ENCODE measurements at regions of chr22 and their contacts with region 1.

Region 1: GRCh38 chr22:28442264-28442710 is 237.4 kb downstream of the TTC28 start:
- DNase-seq: peak; percentile 82
- H3K4me3 Mint-ChIP-seq: peak overlapping the region; percentile 72
- H3K27ac Mint-ChIP-seq: no peak overlapping the region
- H3K4me1 Mint-ChIP-seq: peaks cover 12% of the 10 kb centered on the region
- H3K27me3 Mint-ChIP-seq: peaks cover 27% of the 10 kb centered on the region

Region 2: GRCh38 chr22:27880778-27881394 is 561.4 kb before region 1 on chr22:
- CTCF ChIA-PET with region 1: no interaction called
- POLR2A ChIA-PET with region 1: no interaction called
- intact Hi-C with region 1: loop called (anchors 5 kb)
- DNase-seq: no peak
- H3K4me3 Mint-ChIP-seq: no peak overlapping the region
- H3K27ac Mint-ChIP-seq: no peak overlapping the region
- H3K4me1 Mint-ChIP-seq: peaks cover 27% of the 10 kb centered on the region
- H3K27me3 Mint-ChIP-seq: no peaks in the 10 kb centered on the region

Region 3: DNA sequence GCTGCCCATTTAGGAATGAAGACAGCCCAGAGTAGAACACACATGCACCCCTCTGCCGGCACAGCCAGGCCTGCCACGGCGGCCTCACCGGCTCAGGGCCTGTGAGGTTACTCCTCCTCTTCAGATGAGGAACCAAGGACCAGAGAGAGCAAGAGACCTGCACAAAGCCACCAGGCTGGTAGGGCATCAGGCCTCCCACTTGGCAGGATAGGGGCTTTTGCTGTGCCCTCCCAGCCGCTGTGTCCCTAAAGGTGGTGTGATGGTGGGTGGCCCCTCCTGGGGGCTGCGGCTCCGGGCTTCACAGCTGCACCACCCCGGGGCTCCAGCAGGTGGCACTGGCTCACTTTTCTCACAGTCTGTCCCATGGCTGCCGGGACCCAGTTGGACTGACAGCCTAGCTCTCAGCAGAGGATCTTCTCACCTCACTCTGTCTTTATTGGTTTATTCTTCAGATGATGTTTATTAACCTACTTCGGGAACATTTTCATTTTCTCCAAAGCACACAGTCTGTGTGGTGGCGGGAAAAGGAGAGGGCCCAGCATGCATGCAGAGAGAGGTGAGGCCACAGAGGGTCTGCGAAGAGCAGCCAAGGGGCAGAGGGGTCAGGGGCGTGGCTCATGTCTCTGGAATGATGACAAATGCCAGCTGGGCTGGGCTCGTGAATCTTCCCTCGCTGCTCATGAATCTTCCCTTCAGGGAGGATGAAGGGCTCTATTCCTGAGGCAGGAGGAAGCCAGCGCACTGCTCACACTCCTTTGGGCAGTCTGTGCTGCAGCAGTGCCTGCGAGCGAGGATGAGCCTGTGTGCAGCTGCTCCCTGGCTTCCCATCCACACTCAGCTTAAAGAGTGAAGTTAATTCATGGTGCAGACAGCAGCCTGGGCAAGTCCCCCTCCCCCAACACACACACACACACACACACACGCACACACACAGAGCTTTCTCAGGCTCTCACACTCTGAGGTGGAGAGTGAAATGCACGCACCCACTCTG is 422.1 kb before region 1 on chr22:
- CTCF ChIA-PET with region 1: interaction called, 16 read pairs
- POLR2A ChIA-PET with region 1: no interaction called
- intact Hi-C with region 1: no loop called
- DNase-seq: peak; percentile 71
- H3K4me3 Mint-ChIP-seq: no peak overlapping the region
- H3K27ac Mint-ChIP-seq: no peak overlapping the region
- H3K4me1 Mint-ChIP-seq: no peaks in the 10 kb centered on the region
- H3K27me3 Mint-ChIP-seq: peaks cover 2% of the 10 kb centered on the region

Region 4: DNA sequence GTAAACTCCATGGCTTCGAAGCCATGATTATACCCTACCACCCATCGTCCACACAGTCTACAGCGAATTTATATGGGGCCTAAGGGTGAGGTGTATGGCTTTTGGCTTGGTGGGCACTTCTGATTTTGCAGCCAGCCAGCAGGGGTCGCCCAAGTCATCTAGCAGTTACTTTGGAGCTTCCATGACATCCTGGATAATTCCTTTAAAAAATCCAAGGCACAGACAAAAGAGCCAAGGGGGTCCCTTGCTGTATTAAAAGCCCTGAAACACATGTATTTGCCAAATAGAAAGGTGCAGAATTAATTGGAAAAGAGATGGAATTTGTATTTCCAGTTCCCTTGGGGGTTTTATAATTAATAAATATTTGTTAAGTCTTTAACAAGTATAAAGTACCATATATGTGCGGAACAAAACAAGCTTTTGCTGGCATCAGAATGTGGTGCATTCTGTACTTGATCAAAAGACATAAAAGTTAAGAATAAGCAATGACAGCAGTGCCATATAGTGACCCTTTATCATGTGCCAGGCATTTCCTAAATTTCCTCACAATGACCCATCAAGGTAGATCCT is 390.4 kb before region 1 on chr22:
- CTCF ChIA-PET with region 1: interaction called, 11 read pairs
- POLR2A ChIA-PET with region 1: no interaction called
- intact Hi-C with region 1: no loop called
- DNase-seq: peak; percentile 41
- H3K4me3 Mint-ChIP-seq: no peak overlapping the region
- H3K27ac Mint-ChIP-seq: no peak overlapping the region
- H3K4me1 Mint-ChIP-seq: no peaks in the 10 kb centered on the region
- H3K27me3 Mint-ChIP-seq: no peaks in the 10 kb centered on the region

Region 5: DNA sequence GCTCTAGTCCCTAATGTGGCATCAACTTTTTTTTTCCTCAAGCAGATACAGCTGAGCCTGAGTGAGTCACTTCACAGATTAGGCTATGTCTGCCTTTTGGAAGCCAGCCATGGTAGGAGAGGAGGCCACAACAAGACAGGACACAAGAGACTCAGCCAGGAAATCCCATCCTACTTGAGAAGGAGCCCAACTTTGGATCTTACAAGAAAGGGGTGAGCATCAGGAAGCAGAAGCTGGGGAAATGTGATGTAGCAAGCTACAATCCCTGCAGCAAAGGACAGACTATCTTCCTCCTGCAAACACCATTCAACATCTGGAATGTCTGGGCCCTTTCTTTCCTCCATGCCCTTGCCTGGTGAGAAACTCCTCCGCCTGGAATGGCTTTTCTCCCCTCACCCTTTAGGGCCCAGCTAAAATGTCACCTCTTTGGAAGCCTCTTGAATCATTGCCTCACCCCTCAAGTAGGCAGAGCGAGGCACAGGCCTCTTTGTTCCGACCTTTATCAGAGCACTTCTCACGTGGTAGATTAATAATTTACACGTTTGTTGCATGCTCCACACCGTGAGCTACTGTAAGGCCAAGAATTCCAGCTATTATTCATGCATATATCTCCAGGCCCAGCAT is 366.8 kb before region 1 on chr22:
- CTCF ChIA-PET with region 1: no interaction called
- POLR2A ChIA-PET with region 1: no interaction called
- intact Hi-C with region 1: no loop called
- DNase-seq: no peak
- H3K4me3 Mint-ChIP-seq: no peak overlapping the region
- H3K27ac Mint-ChIP-seq: no peak overlapping the region
- H3K4me1 Mint-ChIP-seq: no peaks in the 10 kb centered on the region
- H3K27me3 Mint-ChIP-seq: no peaks in the 10 kb centered on the region

Region 6: GRCh38 chr22:28373831-28374230 is 68.5 kb before region 1 on chr22:
- CTCF ChIA-PET with region 1: no interaction called
- POLR2A ChIA-PET with region 1: no interaction called
- intact Hi-C with region 1: loop called (anchors 5 kb)
- DNase-seq: no peak
- H3K4me3 Mint-ChIP-seq: no peak overlapping the region
- H3K27ac Mint-ChIP-seq: no peak overlapping the region
- H3K4me1 Mint-ChIP-seq: peaks cover 4% of the 10 kb centered on the region
- H3K27me3 Mint-ChIP-seq: peaks cover 4% of the 10 kb centered on the region

Measured in activated CD4-positive, alpha-beta memory T cell treated with anti-CD3 and anti-CD28 coated beads for 36 hours (primary cell).